Posterior cingulate gyrus (tissue), 11 donors: ENCODE measurements at regions of chr4 and their contacts with region 1.

Region 1: DNA sequence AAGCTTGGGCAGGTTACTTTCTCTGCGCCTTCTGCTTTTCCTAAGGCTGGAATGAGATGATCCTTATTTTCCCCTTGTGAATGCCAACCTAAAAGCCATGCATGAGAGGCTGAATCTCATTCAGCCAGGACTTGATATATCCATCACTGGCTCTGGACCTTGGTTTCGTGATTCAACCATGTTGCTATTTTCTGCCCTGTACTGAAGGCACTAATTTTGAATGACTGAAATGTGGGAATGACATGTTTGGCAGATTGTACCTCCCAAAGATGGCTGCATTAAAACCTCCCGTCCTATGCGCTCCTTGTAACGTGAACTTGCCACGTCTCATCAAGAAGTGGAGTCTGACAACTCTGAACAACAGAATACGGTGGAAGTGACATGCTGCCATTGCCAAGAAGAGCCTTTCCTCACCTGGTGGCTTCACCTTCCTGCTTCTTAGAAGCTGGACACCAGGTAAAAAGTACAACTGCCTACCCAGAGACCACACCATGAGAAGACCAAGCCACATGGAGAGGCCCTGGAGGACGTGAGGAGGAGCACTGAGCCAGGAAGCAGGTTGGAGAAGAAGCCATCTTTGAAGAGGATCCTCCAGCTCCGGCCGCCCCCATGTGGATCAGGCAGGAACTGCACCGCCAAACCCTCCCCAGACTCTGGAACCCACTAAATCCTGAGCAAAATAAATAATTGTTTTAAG is 174.5 kb downstream of the NSUN7 start:
- DNase-seq: peak in 9 of 10 donors; percentile 58 to 95 (median 73)

Region 2: DNA sequence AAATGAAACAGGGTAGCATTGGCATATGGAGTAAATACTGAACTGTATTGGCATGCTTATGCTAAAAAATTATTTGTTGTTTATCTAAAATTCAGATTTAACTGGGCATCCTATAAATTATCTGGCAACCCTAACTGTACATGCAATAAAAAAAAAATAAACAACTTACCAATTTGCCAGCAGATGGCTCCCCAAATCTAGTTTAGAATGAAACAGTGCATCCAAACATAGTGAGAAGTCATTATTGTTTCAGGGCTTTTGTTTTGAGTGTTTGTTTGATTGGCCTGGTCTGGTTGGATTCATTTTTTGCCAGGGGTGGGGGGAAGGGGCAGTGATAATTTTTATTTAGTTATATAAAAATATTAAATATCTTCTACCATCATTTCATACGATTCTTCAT is 187.3 kb before region 1 on chr4:
- intact Hi-C with region 1: loop called (anchors 2 kb)
- DNase-seq: no peak

Region 3: GRCh38 chr4:40788331-40788730 is 135.9 kb before region 1 on chr4:
- intact Hi-C with region 1: no loop called
- DNase-seq: no peak

Region 4: GRCh38 chr4:40976343-40976742 is 52.1 kb after region 1 on chr4:
- intact Hi-C with region 1: loop called (anchors 5 kb)
- DNase-seq: no peak

Region 5: DNA sequence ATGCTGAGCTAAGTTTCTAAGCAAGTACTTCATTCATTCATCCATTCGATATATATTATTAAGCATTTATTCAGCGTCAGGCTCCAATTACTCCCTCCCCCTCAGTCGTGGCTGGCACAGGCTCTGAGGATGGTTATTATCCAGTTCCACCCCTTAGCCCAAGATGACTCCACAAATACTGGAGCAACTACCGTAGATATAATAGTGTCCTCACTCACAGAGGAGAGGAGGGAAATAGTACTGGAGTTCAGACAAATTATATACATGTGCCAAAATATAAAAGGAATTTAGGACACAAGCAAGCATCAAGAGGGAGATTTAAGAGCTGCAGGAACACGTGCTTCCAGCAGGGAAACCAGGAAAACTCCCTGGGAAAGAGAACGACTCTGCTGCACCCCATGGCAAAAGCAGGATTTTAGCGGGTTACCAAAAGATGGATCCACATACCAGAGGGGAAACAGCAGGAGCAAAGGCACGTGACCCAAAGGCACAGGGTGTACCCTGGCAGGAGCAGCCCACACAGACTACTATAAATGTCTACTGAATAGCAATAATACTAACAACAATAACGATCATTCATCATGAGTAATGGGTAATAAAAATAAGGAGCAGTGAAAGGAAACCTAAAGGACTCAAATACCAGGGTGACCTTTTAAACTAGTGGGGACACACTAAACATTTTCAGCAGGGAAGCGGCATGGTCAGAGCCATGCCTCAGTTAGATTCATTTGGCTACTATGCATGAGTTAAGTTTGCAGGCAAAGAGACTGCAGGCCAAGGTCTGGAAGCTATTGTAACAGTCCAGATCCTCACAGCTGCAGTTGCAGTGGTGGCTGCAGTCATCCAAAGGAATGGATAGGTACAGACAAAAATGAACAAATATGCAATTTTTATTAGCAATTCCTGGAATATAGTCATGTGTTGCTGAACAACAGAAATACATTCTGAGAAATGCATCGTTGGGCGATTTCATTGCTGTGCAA is 136.4 kb after region 1 on chr4:
- intact Hi-C with region 1: loop called (anchors 5 kb)
- DNase-seq: peak in 5 of 10 donors; percentile 18 to 61 (median 37)